Endothelial cell of umbilical vein (primary cell): ENCODE measurements at regions of chr11 and their contacts with region 1.

Region 1: DNA sequence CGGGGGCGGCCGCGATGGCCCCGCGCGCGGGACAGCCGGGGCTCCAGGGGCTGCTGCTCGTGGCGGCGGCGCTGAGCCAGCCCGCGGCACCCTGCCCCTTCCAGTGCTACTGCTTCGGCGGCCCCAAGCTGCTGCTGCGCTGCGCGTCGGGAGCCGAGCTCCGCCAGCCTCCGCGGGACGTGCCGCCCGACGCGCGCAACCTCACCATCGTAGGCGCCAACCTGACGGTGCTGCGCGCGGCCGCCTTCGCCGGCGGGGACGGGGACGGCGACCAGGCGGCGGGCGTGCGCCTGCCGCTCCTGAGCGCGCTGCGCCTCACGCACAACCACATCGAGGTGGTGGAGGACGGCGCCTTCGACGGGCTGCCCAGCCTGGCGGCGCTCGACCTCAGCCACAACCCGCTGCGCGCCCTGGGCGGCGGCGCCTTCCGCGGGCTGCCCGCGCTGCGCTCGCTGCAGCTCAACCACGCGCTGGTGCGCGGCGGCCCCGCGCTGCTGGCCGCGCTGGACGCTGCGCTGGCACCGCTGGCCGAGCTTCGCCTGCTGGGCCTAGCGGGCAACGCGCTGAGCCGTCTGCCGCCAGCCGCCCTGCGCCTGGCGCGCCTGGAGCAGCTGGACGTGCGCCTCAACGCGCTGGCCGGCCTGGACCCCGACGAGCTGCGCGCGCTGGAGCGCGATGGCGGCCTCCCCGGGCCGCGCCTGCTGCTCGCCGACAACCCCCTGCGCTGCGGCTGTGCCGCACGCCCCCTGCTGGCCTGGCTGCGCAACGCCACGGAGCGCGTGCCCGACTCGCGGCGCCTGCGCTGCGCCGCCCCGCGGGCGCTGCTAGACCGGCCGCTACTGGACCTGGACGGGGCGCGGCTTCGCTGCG is 697 bp downstream of the TPBGL start:
- DNase-seq: peak; percentile 85
- H3K4me3 ChIP-seq: peak overlapping the region in 2 of 3 experiments; percentile 4 to 31
- H3K27ac ChIP-seq: no peak overlapping the region
- H3K4me1 ChIP-seq: peaks cover 7% of the 10 kb centered on the region
- H3K27me3 ChIP-seq: peaks cover 50 to 51% of the 10 kb centered on the region in 2 experiments
- CTCF ChIP-seq: peak; percentile 61 to 99
- POLR2A ChIP-seq: no peak

Region 2: DNA sequence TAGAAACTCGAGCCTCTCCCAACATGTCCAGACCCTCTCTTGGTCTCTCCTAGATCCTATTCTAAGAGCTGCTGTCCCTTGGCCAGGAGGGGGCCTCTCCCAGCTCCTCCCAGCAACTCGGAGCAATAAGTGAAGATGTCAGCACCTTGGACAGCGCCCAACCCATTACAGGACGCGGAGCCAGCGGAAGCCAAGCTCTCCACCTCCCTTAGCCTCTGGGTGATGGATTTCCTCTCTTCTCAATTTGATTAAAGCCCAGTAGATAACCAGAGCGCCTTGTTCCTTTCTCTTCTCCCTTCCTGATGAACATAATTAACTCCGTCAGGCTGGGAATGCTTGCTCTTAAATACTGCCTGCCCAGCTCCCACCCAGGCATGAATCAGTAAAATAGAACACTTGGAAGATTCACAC is 26.9 kb before region 1 on chr11:
- CTCF ChIA-PET with region 1: interaction called, 40 read pairs
- POLR2A ChIA-PET with region 1: no interaction called
- dilution Hi-C with region 1: no loop called
- intact Hi-C with region 1: loop called (anchors 2 kb)
- DNase-seq: peak; percentile 73
- H3K4me3 ChIP-seq: no peak overlapping the region
- H3K27ac ChIP-seq: no peak overlapping the region
- H3K4me1 ChIP-seq: no peaks in the 10 kb centered on the region
- H3K27me3 ChIP-seq: peaks cover under 1 to 1% of the 10 kb centered on the region in 2 experiments
- CTCF ChIP-seq: peak; percentile 48 to 63
- POLR2A ChIP-seq: no peak

Region 3: GRCh38 chr11:75223954-75224643 is 17.2 kb before region 1 on chr11:
- CTCF ChIA-PET with region 1: interaction called, 19 read pairs
- POLR2A ChIA-PET with region 1: no interaction called
- dilution Hi-C with region 1: no loop called
- intact Hi-C with region 1: no loop called
- DNase-seq: no peak
- H3K4me3 ChIP-seq: no peak overlapping the region
- H3K27ac ChIP-seq: no peak overlapping the region
- H3K4me1 ChIP-seq: no peaks in the 10 kb centered on the region
- H3K27me3 ChIP-seq: peaks cover 2 to 3% of the 10 kb centered on the region in 2 experiments
- CTCF ChIP-seq: no peak
- POLR2A ChIP-seq: no peak

Region 4: DNA sequence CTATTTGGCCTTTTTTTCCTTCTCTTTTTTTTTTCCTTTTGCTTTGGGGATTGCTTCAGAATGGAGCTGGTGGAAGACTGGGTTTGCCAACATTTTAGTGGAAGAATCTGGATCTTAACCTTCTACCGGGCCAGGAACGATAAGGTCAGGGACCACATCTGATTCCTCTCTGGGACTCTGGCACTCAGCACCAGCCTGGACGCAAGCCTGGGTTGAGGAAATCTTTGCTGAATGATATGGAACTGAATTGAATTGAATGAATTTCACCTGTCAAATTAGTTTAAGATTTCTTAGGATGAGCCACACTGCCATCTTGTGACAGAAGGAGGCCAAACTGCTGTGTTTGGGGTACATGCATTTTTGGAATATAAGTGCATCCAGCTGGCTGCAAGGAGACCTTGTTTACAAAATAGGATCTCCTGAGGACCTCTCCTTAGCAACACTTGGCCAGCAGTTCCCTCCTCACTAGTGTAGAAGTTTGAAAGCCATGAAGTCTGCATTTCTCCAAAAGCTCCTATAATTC is 29.7 kb after region 1 on chr11:
- CTCF ChIA-PET with region 1: no interaction called
- POLR2A ChIA-PET with region 1: no interaction called
- dilution Hi-C with region 1: no loop called
- intact Hi-C with region 1: no loop called
- DNase-seq: peak; percentile 23
- H3K4me3 ChIP-seq: no peak overlapping the region
- H3K27ac ChIP-seq: no peak overlapping the region
- H3K4me1 ChIP-seq: peaks cover 9% of the 10 kb centered on the region
- H3K27me3 ChIP-seq: no peaks in the 10 kb centered on the region
- CTCF ChIP-seq: peak in 1 of 2 donors; percentile 12
- POLR2A ChIP-seq: no peak

Region 5: GRCh38 chr11:75286826-75287465 is 45.7 kb after region 1 on chr11:
- CTCF ChIA-PET with region 1: no interaction called
- POLR2A ChIA-PET with region 1: no interaction called
- dilution Hi-C with region 1: no loop called
- intact Hi-C with region 1: no loop called
- DNase-seq: no peak
- H3K4me3 ChIP-seq: no peak overlapping the region
- H3K27ac ChIP-seq: no peak overlapping the region
- H3K4me1 ChIP-seq: no peaks in the 10 kb centered on the region
- H3K27me3 ChIP-seq: no peaks in the 10 kb centered on the region
- CTCF ChIP-seq: no peak
- POLR2A ChIP-seq: no peak